ENCODE measurements at regions of chr7 and their contacts with region 1.

Region 1: GRCh38 chr7:90749262-90749661 is 153.1 kb downstream of the CDK14 start:
- DNase-seq: no peak
- H3K4me3 ChIP-seq: no peak overlapping the region
- H3K27ac ChIP-seq: no peak overlapping the region
- H3K4me1 ChIP-seq: peaks cover 0 to 3% of the 10 kb centered on the region in 2 experiments; a peak in 1 of 4 replicates
- H3K27me3 ChIP-seq: no peaks in the 10 kb centered on the region
- CTCF ChIP-seq: no peak
- EP300 ChIP-seq: no peak
- RAD21 ChIP-seq: no peak

Region 2: GRCh38 chr7:89681448-89681847 is 1067.8 kb before region 1 on chr7:
- CTCF ChIA-PET with region 1: no interaction called
- POLR2A ChIA-PET with region 1: no interaction called
- DNase-seq: no peak
- H3K4me3 ChIP-seq: no peak overlapping the region
- H3K27ac ChIP-seq: no peak overlapping the region
- H3K4me1 ChIP-seq: no peaks in the 10 kb centered on the region; a peak in 1 of 4 replicates
- H3K27me3 ChIP-seq: no peaks in the 10 kb centered on the region
- CTCF ChIP-seq: no peak
- EP300 ChIP-seq: no peak
- RAD21 ChIP-seq: no peak

Region 3: GRCh38 chr7:90759710-90760109 is 10.4 kb after region 1 on chr7:
- CTCF ChIA-PET with region 1: interaction called, 23 read pairs
- POLR2A ChIA-PET with region 1: interaction called, 3 read pairs
- DNase-seq: no peak
- H3K4me3 ChIP-seq: no peak overlapping the region
- H3K27ac ChIP-seq: no peak overlapping the region
- H3K4me1 ChIP-seq: peaks cover 10 to 16% of the 10 kb centered on the region in 2 experiments; a peak in 3 of 4 replicates
- H3K27me3 ChIP-seq: no peaks in the 10 kb centered on the region
- CTCF ChIP-seq: no peak
- EP300 ChIP-seq: no peak
- RAD21 ChIP-seq: no peak

Region 4: GRCh38 chr7:90797596-90797995 is 48.3 kb after region 1 on chr7:
- CTCF ChIA-PET with region 1: no interaction called
- POLR2A ChIA-PET with region 1: no interaction called
- DNase-seq: no peak
- H3K4me3 ChIP-seq: no peak overlapping the region
- H3K27ac ChIP-seq: no peak overlapping the region
- H3K4me1 ChIP-seq: no peaks in the 10 kb centered on the region
- H3K27me3 ChIP-seq: no peaks in the 10 kb centered on the region
- CTCF ChIP-seq: no peak
- EP300 ChIP-seq: no peak
- RAD21 ChIP-seq: no peak

Measured in SK-N-SH (cell line).